ENCODE measurements at regions of chr17 and their contacts with region 1.

Region 1: DNA sequence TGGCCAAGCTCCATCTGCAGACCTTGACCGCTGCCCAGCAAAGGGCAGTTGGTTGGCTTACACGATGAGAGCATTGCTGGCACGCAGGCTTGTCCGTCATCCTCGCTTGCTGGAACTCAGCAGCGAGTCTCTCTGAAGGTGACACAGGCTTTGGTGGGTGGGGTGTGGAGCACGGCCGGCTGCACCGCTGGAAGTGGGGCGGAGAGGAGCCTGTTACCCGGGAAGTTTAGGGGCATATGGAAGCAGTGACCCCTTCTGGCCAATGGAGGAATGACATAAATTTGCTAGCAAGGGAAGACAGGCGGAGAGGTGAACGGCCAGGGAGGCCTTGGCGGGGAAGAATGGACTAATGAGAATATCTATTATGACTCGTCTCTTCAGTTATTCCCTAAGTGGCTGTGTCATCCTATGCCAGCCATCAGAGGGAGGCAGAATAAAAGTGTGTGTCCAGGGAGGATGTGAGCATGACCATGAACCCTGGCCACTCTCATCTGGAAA is 65.9 kb upstream of the SDK2 start:
- DNase-seq: peak; percentile 37 to 80 (median 67)
- ATAC-seq: peak; percentile 78
- H3K4me3 ChIP-seq: no peak overlapping the region
- H3K4me3 Mint-ChIP-seq: no peak overlapping the region
- H3K27ac ChIP-seq: no peak overlapping the region
- H3K27ac Mint-ChIP-seq: no peak overlapping the region
- H3K4me1 ChIP-seq: peaks cover 6% of the 10 kb centered on the region
- H3K4me1 Mint-ChIP-seq: peaks cover 12% of the 10 kb centered on the region
- H3K27me3 ChIP-seq: no peaks in the 10 kb centered on the region
- H3K27me3 Mint-ChIP-seq: no peaks in the 10 kb centered on the region
- CTCF ChIP-seq: peak; percentile 82

Region 2: DNA sequence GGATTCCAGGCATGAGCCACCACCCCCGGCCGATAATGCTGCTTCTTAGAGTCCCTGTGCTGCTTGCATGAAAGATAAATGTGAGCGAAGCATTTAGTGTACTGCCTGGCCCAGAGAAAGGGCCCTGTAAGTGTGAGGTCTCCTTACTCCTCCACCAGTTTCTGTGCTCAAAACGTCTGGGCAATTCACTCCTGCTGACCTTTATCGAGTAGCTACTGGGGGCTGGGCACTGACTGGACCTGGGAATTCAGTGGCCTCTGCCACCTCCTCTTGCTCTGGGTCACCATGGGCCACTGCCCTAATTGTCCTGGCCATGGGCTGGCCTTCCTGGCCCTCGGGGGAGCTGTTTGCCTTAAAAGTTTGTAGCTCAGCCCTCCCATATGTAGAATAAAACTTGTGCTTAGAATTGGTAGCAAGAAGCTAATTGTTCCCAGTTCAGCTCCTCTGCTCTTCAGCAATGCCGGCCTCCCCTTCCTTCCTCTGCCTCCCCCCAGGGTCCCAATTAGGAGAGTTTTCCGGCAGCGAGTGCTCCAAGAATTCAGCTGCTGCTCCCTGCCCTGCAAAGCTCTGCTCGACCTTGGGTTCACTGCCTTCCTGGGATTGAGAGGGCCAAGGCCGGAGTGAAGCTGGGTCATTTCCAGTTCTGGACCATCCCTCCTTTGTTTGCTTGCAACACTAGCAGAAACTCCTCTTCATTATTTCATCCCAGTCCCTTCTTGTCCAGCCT is 299.4 kb before region 1 on chr17:
- CTCF ChIA-PET with region 1: no interaction called
- POLR2A ChIA-PET with region 1: no interaction called
- intact Hi-C with region 1: no loop called
- DNase-seq: no peak
- ATAC-seq: no peak
- H3K4me3 ChIP-seq: no peak overlapping the region
- H3K4me3 Mint-ChIP-seq: no peak overlapping the region
- H3K27ac ChIP-seq: no peak overlapping the region
- H3K27ac Mint-ChIP-seq: peak overlapping the region; percentile 22
- H3K4me1 ChIP-seq: no peaks in the 10 kb centered on the region
- H3K4me1 Mint-ChIP-seq: no peaks in the 10 kb centered on the region
- H3K27me3 ChIP-seq: no peaks in the 10 kb centered on the region
- H3K27me3 Mint-ChIP-seq: no peaks in the 10 kb centered on the region
- CTCF ChIP-seq: no peak

Region 3: DNA sequence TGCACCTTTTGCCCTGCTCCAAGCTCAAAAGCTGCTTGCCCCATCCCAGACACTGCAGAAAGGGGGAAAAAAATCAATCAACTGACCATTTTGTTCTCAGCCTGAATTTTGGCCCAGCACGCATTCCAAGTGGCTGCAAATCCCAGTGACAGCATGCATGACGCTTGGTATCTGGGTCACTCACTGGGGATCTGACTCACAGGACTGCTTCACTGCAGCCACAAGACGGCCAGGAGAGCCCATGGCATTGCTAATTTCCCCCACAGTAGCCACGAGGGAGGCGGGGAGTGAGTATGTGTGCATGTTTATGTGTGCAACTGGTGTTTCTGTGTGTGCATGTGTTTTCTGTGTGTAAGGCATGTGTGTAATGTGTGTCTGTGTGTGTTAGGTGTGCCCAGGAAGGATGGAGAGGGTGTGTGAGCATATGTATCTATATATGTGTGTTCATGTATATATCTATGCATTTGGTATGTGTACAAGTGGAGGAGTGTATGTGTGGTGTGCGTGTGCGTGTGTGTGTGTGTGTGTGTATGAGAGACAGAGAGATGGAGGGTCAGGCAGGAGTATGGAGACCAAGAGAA is 99.7 kb before region 1 on chr17:
- CTCF ChIA-PET with region 1: no interaction called
- POLR2A ChIA-PET with region 1: no interaction called
- intact Hi-C with region 1: no loop called
- DNase-seq: no peak
- ATAC-seq: no peak
- H3K4me3 ChIP-seq: no peak overlapping the region
- H3K4me3 Mint-ChIP-seq: no peak overlapping the region
- H3K27ac ChIP-seq: no peak overlapping the region
- H3K27ac Mint-ChIP-seq: no peak overlapping the region
- H3K4me1 ChIP-seq: no peaks in the 10 kb centered on the region
- H3K4me1 Mint-ChIP-seq: peaks cover 6% of the 10 kb centered on the region
- H3K27me3 ChIP-seq: no peaks in the 10 kb centered on the region
- H3K27me3 Mint-ChIP-seq: no peaks in the 10 kb centered on the region
- CTCF ChIP-seq: no peak

Region 4: GRCh38 chr17:73695035-73695738 is 15.0 kb before region 1 on chr17:
- CTCF ChIA-PET with region 1: interaction called, 13 read pairs
- POLR2A ChIA-PET with region 1: no interaction called
- intact Hi-C with region 1: no loop called
- DNase-seq: peak in 1 of 9 experiments; percentile 42
- ATAC-seq: no peak
- H3K4me3 ChIP-seq: no peak overlapping the region
- H3K4me3 Mint-ChIP-seq: no peak overlapping the region
- H3K27ac ChIP-seq: no peak overlapping the region
- H3K27ac Mint-ChIP-seq: no peak overlapping the region
- H3K4me1 ChIP-seq: no peaks in the 10 kb centered on the region
- H3K4me1 Mint-ChIP-seq: no peaks in the 10 kb centered on the region
- H3K27me3 ChIP-seq: no peaks in the 10 kb centered on the region
- H3K27me3 Mint-ChIP-seq: no peaks in the 10 kb centered on the region
- CTCF ChIP-seq: no peak

Region 5: DNA sequence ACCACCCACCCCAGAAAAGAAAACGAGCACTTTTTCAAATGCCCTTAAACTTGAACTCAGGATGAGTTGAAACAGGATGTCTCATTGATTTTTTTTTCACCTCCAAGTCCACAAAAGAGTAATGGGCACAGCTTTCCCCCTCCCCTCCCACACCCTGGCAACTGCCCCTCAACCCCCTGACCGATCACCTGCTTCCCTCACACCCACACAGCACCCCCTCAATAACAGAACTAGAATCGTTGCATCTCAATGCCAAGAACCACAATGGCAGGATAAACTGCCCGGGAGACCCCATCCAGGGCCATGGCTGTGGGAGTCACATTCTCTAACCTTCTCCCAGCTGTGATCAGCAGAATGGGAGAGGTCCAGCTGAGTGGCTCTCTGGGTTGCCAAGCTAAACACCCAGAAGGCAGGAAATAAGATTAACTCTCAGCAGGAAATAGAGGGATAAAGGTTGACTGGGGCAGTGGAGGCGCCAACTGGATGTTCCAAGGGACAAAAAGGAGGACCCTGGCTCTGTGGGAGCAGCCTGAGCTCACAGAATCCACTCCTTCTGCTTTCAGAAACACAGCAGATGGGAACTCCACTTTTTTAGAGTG is 62.1 kb after region 1 on chr17:
- CTCF ChIA-PET with region 1: no interaction called
- POLR2A ChIA-PET with region 1: no interaction called
- intact Hi-C with region 1: no loop called
- DNase-seq: no peak
- ATAC-seq: no peak
- H3K4me3 ChIP-seq: no peak overlapping the region
- H3K4me3 Mint-ChIP-seq: no peak overlapping the region
- H3K27ac ChIP-seq: no peak overlapping the region
- H3K27ac Mint-ChIP-seq: no peak overlapping the region
- H3K4me1 ChIP-seq: no peaks in the 10 kb centered on the region
- H3K4me1 Mint-ChIP-seq: no peaks in the 10 kb centered on the region
- H3K27me3 ChIP-seq: no peaks in the 10 kb centered on the region
- H3K27me3 Mint-ChIP-seq: no peaks in the 10 kb centered on the region
- CTCF ChIP-seq: no peak

Region 6: GRCh38 chr17:73956669-73957465 is 246.7 kb after region 1 on chr17:
- CTCF ChIA-PET with region 1: interaction called, 4 read pairs
- POLR2A ChIA-PET with region 1: no interaction called
- intact Hi-C with region 1: loop called in 1 of 2 experiments (anchors 5 kb)
- DNase-seq: peak; percentile 13 to 77 (median 53)
- ATAC-seq: peak; percentile 54
- H3K4me3 ChIP-seq: no peak overlapping the region
- H3K4me3 Mint-ChIP-seq: no peak overlapping the region
- H3K27ac ChIP-seq: no peak overlapping the region
- H3K27ac Mint-ChIP-seq: no peak overlapping the region
- H3K4me1 ChIP-seq: peaks cover 4% of the 10 kb centered on the region
- H3K4me1 Mint-ChIP-seq: peaks cover 3% of the 10 kb centered on the region
- H3K27me3 ChIP-seq: peaks cover 9 to 23% of the 10 kb centered on the region in 2 experiments
- H3K27me3 Mint-ChIP-seq: peaks cover 3% of the 10 kb centered on the region
- CTCF ChIP-seq: peak; percentile 35